B cell (primary cell): ENCODE measurements at regions of chr17 and their contacts with region 1.

Region 1: GRCh38 chr17:34980681-34981537 is 597 bp downstream of the LIG3 start:
- DNase-seq: peak; percentile 88
- ATAC-seq: peak; percentile 91
- H3K4me3 ChIP-seq: peak overlapping the region; percentile 8 to 98 (median 93)
- H3K4me3 Mint-ChIP-seq: peak overlapping the region; percentile 98
- H3K27ac ChIP-seq: peak overlapping the region; percentile 95 to 99
- H3K27ac Mint-ChIP-seq: peak overlapping the region; percentile 97
- H3K4me1 ChIP-seq: peaks cover 15 to 16% of the 10 kb centered on the region in 2 donors
- H3K4me1 Mint-ChIP-seq: peaks cover 28% of the 10 kb centered on the region
- H3K27me3 ChIP-seq: no peaks in the 10 kb centered on the region
- H3K27me3 Mint-ChIP-seq: no peaks in the 10 kb centered on the region
- CTCF ChIP-seq: peak; percentile 63

Region 2: DNA sequence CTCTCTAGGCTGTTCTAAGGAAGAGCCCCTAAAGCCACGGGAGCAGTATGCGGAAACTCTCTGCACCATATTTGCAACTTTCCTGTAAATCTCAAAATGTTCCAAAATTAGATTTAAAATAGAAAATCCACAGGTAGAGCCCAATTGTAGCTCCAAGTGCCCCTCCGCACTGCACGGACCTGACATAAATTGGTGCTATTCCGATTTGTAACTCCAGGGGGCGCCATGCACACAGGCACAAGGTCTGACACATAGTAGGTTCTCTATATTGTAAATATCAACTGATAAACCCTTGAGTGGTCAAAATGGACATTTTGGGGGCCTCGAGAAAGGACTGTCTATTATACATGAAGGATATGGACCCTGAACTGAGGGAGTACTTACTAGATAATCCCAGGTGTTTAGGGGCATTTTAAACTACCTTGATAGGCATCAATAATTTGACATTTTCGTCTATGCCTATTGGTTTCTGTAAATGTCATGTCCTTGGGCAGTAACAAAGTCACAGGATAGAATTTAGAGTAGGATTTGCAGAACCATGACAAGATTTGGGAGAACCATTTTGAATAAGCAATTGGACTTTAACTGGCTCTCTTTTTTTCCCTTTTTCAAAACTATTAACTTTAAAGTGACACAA is 438.1 kb before region 1 on chr17:
- CTCF ChIA-PET with region 1: interaction called, 4 read pairs
- POLR2A ChIA-PET with region 1: no interaction called
- intact Hi-C with region 1: loop called (anchors 2 kb)
- DNase-seq: peak; percentile 65
- ATAC-seq: peak; percentile 45
- H3K4me3 ChIP-seq: no peak overlapping the region
- H3K4me3 Mint-ChIP-seq: no peak overlapping the region
- H3K27ac ChIP-seq: no peak overlapping the region
- H3K27ac Mint-ChIP-seq: no peak overlapping the region
- H3K4me1 ChIP-seq: no peaks in the 10 kb centered on the region
- H3K4me1 Mint-ChIP-seq: no peaks in the 10 kb centered on the region
- H3K27me3 ChIP-seq: peaks cover 0 to 22% (median 10%) of the 10 kb centered on the region in 4 experiments
- H3K27me3 Mint-ChIP-seq: peaks cover 44% of the 10 kb centered on the region
- CTCF ChIP-seq: peak; percentile 92

Region 3: GRCh38 chr17:34562387-34562786 is 418.5 kb before region 1 on chr17:
- CTCF ChIA-PET with region 1: interaction called, 4 read pairs
- POLR2A ChIA-PET with region 1: no interaction called
- intact Hi-C with region 1: loop called (anchors 5 kb)
- DNase-seq: peak; percentile 18
- ATAC-seq: no peak
- H3K4me3 ChIP-seq: no peak overlapping the region
- H3K4me3 Mint-ChIP-seq: no peak overlapping the region
- H3K27ac ChIP-seq: no peak overlapping the region
- H3K27ac Mint-ChIP-seq: no peak overlapping the region
- H3K4me1 ChIP-seq: no peaks in the 10 kb centered on the region
- H3K4me1 Mint-ChIP-seq: no peaks in the 10 kb centered on the region
- H3K27me3 ChIP-seq: peaks cover 0 to 14% (median 8%) of the 10 kb centered on the region in 4 experiments
- H3K27me3 Mint-ChIP-seq: peaks cover 13% of the 10 kb centered on the region
- CTCF ChIP-seq: peak; percentile 61

Region 4: GRCh38 chr17:34683390-34683789 is 297.5 kb before region 1 on chr17:
- CTCF ChIA-PET with region 1: no interaction called
- POLR2A ChIA-PET with region 1: no interaction called
- intact Hi-C with region 1: no loop called
- DNase-seq: no peak
- ATAC-seq: no peak
- H3K4me3 ChIP-seq: no peak overlapping the region
- H3K4me3 Mint-ChIP-seq: no peak overlapping the region
- H3K27ac ChIP-seq: no peak overlapping the region
- H3K27ac Mint-ChIP-seq: no peak overlapping the region
- H3K4me1 ChIP-seq: no peaks in the 10 kb centered on the region
- H3K4me1 Mint-ChIP-seq: no peaks in the 10 kb centered on the region
- H3K27me3 ChIP-seq: peaks cover 0 to 2% (median 0%) of the 10 kb centered on the region in 4 experiments
- H3K27me3 Mint-ChIP-seq: peaks cover 38% of the 10 kb centered on the region
- CTCF ChIP-seq: no peak

Region 5: DNA sequence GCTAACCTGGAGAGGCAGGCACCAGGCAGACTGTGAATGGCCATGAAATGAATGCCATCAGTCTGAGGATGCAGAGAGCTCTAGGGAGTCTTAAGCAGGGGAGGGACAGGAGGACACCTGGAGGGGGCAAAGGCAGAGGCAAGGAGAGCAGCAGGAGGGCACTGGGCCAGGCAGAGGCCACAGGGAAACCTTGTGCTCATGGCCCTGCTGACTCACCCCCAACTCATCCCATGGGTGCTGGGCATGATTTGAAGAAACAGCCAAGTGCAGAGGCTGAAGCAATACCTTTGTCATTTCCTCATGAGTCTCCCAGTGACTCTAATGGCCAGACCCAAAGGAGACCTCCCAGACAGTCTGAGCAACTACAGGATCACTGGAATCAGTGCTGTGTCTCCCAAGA is 260.1 kb before region 1 on chr17:
- CTCF ChIA-PET with region 1: no interaction called
- POLR2A ChIA-PET with region 1: no interaction called
- intact Hi-C with region 1: no loop called
- DNase-seq: no peak
- ATAC-seq: no peak
- H3K4me3 ChIP-seq: no peak overlapping the region
- H3K4me3 Mint-ChIP-seq: no peak overlapping the region
- H3K27ac ChIP-seq: no peak overlapping the region
- H3K27ac Mint-ChIP-seq: no peak overlapping the region
- H3K4me1 ChIP-seq: no peaks in the 10 kb centered on the region
- H3K4me1 Mint-ChIP-seq: no peaks in the 10 kb centered on the region
- H3K27me3 ChIP-seq: peaks cover 0 to 4% (median 0%) of the 10 kb centered on the region in 4 experiments
- H3K27me3 Mint-ChIP-seq: peaks cover 4% of the 10 kb centered on the region
- CTCF ChIP-seq: no peak

Region 6: DNA sequence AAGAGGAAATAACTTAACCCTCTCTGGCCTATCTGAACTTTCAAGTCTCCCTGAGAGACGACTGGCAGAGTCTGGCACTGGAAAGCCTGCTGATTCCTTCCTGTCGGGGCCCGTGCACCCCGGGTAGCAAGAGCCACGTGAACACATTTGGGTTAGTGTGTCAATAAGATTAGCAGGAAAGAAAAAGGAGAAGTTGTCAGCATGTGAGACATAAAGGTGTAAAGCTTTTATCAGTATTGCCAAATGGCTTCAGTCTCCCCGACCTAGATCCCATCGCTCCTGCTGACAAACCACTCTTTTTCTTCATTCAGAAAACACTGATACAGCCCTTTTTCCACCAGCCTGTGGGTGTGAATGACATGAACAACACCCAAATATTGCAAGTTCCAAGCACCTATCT is 94.1 kb before region 1 on chr17:
- CTCF ChIA-PET with region 1: no interaction called
- POLR2A ChIA-PET with region 1: no interaction called
- intact Hi-C with region 1: no loop called
- DNase-seq: no peak
- ATAC-seq: no peak
- H3K4me3 ChIP-seq: no peak overlapping the region
- H3K4me3 Mint-ChIP-seq: no peak overlapping the region
- H3K27ac ChIP-seq: no peak overlapping the region
- H3K27ac Mint-ChIP-seq: no peak overlapping the region
- H3K4me1 ChIP-seq: peaks cover 3 to 6% of the 10 kb centered on the region in 2 donors
- H3K4me1 Mint-ChIP-seq: peaks cover 6% of the 10 kb centered on the region
- H3K27me3 ChIP-seq: peaks cover 0 to 21% (median 0%) of the 10 kb centered on the region in 4 experiments
- H3K27me3 Mint-ChIP-seq: peaks cover 40% of the 10 kb centered on the region
- CTCF ChIP-seq: no peak

Region 7: GRCh38 chr17:34961093-34961911 is 19.6 kb before region 1 on chr17 and contains the starts of genes CCT6B and ZNF830:
- CTCF ChIA-PET with region 1: interaction called, 11 read pairs
- POLR2A ChIA-PET with region 1: interaction called, 7 read pairs
- intact Hi-C with region 1: loop called (anchors 1 kb)
- DNase-seq: peak; percentile 95
- ATAC-seq: peak; percentile 90
- H3K4me3 ChIP-seq: peak within 1 kb of the TSS; percentile 72 to 98 (median 88)
- H3K4me3 Mint-ChIP-seq: peak within 1 kb of the TSS; percentile 99
- H3K27ac ChIP-seq: peak within 1 kb of the TSS; percentile 85 to 92
- H3K27ac Mint-ChIP-seq: peak within 1 kb of the TSS; percentile 99
- H3K4me1 ChIP-seq: peaks cover 13 to 17% of the 10 kb centered on the region in 2 donors
- H3K4me1 Mint-ChIP-seq: peaks cover 25% of the 10 kb centered on the region
- H3K27me3 ChIP-seq: peaks cover 0 to 7% (median 0%) of the 10 kb centered on the region in 4 experiments
- H3K27me3 Mint-ChIP-seq: peaks cover 10% of the 10 kb centered on the region
- CTCF ChIP-seq: no peak
- total RNA-seq, gene CCT6B: 2.6 and 2.8 TPM in 2 replicates
- total RNA-seq, gene ZNF830: 44.6 and 45.4 TPM in 2 replicates

Region 8: GRCh38 chr17:35028531-35029262 is 47.8 kb after region 1 on chr17:
- CTCF ChIA-PET with region 1: no interaction called
- POLR2A ChIA-PET with region 1: no interaction called
- intact Hi-C with region 1: no loop called
- DNase-seq: no peak
- ATAC-seq: no peak
- H3K4me3 ChIP-seq: no peak overlapping the region
- H3K4me3 Mint-ChIP-seq: no peak overlapping the region
- H3K27ac ChIP-seq: peak overlapping the region in 1 of 2 donors; percentile 21
- H3K27ac Mint-ChIP-seq: no peak overlapping the region
- H3K4me1 ChIP-seq: peaks cover 11 to 13% of the 10 kb centered on the region in 2 donors
- H3K4me1 Mint-ChIP-seq: peaks cover 26% of the 10 kb centered on the region
- H3K27me3 ChIP-seq: no peaks in the 10 kb centered on the region
- H3K27me3 Mint-ChIP-seq: no peaks in the 10 kb centered on the region
- CTCF ChIP-seq: no peak

Region 9: DNA sequence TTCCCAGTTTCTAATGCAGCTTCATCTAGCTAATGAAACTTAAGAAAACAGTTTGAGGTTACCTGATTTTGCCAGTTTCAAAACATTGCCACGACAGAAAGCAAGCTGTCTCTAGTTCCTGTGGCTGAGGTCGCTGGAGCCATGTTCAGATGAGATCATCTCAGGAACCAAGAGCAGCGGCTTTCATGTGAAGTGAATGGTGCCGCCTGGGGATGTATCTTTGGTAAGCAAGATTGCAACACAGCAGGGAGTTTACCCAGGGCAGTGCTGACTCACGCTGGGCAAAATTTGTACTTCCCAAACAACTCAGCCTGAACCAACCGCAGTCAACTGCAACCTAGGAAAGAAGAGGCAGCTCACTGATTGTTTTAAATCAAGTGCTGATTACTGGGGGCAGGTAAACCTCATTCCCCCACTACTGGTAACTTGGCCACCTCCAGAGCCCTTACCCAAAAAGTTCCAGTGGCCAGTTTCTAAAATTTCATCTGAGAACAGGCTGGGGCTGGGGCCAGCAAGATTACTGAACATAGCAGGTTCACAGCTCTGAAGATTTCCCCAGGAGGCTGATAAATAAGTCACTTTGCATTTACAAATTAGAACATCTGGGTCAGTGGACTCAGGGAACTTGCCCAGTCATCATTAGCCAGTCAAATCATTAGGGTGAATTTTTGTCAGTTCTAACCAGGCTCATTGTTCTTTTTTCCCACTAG is 82.8 kb after region 1 on chr17 and contains the start of gene RFFL:
- CTCF ChIA-PET with region 1: interaction called, 3 read pairs
- POLR2A ChIA-PET with region 1: no interaction called
- intact Hi-C with region 1: loop called (anchors 1 kb)
- DNase-seq: peak; percentile 82
- ATAC-seq: peak; percentile 97
- H3K4me3 ChIP-seq: peak within 1 kb of the TSS in 3 of 5 experiments; percentile 20 to 38 (median 30)
- H3K4me3 Mint-ChIP-seq: peak within 1 kb of the TSS; percentile 75
- H3K27ac ChIP-seq: peak within 1 kb of the TSS; percentile 42 to 63
- H3K27ac Mint-ChIP-seq: peak within 1 kb of the TSS; percentile 90
- H3K4me1 ChIP-seq: peaks cover 11 to 12% of the 10 kb centered on the region in 2 donors
- H3K4me1 Mint-ChIP-seq: peaks cover 28% of the 10 kb centered on the region
- H3K27me3 ChIP-seq: no peaks in the 10 kb centered on the region
- H3K27me3 Mint-ChIP-seq: no peaks in the 10 kb centered on the region
- CTCF ChIP-seq: no peak
- total RNA-seq, gene RFFL: 36.2 and 36.9 TPM in 2 replicates

Region 10: DNA sequence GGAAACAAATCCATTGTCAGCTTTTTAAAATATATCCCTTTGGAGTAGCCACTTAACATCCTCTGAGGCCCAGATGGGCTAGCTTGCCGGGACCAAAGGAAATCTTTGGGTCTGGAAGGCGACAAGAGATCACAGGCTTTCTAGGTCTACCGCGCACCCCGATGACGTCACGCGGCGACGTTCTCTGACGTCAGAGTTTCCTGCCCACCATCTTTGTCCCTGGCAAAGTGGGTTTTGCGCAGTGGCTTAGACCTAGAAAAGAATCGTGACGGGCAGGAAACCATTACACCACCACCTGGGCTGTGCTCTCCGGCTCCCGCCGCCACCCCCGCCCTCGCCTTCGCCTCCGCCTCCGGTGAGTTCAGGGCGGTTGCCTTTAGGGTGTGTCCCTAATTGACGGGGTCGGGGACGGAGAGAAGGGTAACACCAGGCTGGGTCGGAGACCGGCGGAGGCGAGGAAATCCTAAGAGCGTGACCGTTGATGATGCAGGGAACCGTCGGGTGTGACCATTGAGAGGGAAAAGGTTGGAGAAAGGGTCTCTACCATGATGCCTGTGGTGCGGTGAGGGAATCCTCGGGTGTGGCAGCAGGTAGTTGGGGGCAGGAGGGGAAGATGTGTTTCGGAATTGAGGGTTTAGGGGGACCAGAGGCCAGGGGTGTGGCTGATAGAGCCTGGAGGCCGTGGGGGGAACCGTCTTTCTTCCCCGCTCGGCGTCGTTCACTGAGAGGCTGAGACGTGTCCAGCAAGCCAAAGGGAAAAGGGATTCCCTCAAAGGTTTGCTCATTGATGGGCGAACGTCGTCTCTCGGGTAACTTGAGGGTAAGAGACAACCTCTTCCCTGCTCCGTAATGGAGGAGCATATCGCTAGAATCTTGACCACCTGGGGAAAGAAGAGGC is 606.4 kb after region 1 on chr17 and contains the start of gene AP2B1:
- CTCF ChIA-PET with region 1: no interaction called
- POLR2A ChIA-PET with region 1: no interaction called
- intact Hi-C with region 1: loop called (anchors 1 kb)
- DNase-seq: peak; percentile 99
- ATAC-seq: peak; percentile 98
- H3K4me3 ChIP-seq: peak within 1 kb of the TSS; percentile 59 to 100 (median 90)
- H3K4me3 Mint-ChIP-seq: peak within 1 kb of the TSS; percentile 92
- H3K27ac ChIP-seq: peak within 1 kb of the TSS; percentile 83 to 89
- H3K27ac Mint-ChIP-seq: peak within 1 kb of the TSS; percentile 95
- H3K4me1 ChIP-seq: peaks cover 11 to 19% of the 10 kb centered on the region in 2 donors
- H3K4me1 Mint-ChIP-seq: peaks cover 33% of the 10 kb centered on the region
- H3K27me3 ChIP-seq: no peaks in the 10 kb centered on the region
- H3K27me3 Mint-ChIP-seq: peaks cover 7% of the 10 kb centered on the region
- CTCF ChIP-seq: no peak
- total RNA-seq, gene AP2B1: 120 and 123 TPM in 2 replicates